ENCODE measurements at regions of chr5 and their contacts with region 1.

Region 1: GRCh38 chr5:143968011-143968878 is 156.3 kb downstream of the HMHB1 start:
- DNase-seq: no peak
- H3K4me3 ChIP-seq: no peak overlapping the region
- H3K27ac ChIP-seq: no peak overlapping the region
- H3K4me1 ChIP-seq: no peaks in the 10 kb centered on the region
- H3K27me3 ChIP-seq: peaks cover 0 to 7% of the 10 kb centered on the region in 2 donors
- CTCF ChIP-seq: no peak
- POLR2A ChIP-seq: no peak

Region 2: DNA sequence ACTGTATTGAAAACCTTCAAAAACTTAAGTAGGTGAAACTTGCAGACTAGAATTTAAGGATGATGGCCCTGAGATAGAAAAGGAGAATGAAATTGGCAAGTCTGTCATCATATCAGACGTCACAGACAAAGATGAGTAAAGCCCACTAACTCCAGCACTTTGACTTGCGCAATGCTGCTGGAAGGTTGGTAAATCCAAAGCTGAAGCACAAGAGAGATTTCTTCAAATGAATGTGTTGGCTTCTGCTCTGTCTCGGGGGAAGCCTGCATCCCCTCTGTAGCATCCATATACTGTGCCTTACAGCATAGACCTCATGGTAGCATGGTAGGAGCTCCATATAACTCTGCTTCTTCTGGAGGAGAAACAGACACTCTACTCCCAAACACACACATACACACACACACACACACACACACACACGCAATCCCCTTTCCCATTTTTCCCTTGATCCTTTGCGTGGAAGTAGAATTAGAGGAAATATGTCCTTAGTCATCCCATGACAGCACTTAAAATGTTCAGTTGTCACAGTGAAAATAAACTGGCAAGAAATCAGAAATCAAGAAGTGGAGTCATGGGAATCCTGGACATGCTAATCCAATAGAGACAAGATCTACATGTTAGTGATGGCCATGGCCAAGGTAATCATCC is 806.2 kb before region 1 on chr5:
- intact Hi-C with region 1: loop called (anchors 5 kb)
- DNase-seq: no peak
- H3K4me3 ChIP-seq: no peak overlapping the region
- H3K27ac ChIP-seq: no peak overlapping the region
- H3K4me1 ChIP-seq: no peaks in the 10 kb centered on the region
- H3K27me3 ChIP-seq: no peaks in the 10 kb centered on the region
- CTCF ChIP-seq: no peak
- POLR2A ChIP-seq: no peak

Region 3: DNA sequence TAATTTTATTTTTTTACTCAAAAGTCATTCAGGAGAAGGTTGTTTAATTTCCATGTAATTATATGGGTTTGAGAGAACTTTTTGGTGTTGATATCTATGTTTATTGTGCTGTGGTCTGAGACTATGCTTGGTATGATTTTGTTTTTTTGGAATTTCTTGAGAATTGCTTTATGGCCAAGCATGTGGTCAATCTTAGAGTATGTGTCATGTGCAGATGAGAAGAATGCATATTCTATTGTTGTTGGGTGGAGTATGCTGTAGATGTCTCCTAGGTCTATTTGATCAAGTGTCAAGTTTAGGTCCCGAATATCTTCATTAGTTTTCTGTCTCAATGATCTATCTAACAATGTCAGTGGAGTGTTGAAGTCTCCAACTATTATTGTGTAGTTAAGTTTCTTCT is 21.4 kb before region 1 on chr5:
- intact Hi-C with region 1: no loop called
- DNase-seq: no peak
- H3K4me3 ChIP-seq: no peak overlapping the region
- H3K27ac ChIP-seq: no peak overlapping the region
- H3K4me1 ChIP-seq: no peaks in the 10 kb centered on the region
- H3K27me3 ChIP-seq: no peaks in the 10 kb centered on the region
- CTCF ChIP-seq: no peak
- POLR2A ChIP-seq: no peak

Region 4: DNA sequence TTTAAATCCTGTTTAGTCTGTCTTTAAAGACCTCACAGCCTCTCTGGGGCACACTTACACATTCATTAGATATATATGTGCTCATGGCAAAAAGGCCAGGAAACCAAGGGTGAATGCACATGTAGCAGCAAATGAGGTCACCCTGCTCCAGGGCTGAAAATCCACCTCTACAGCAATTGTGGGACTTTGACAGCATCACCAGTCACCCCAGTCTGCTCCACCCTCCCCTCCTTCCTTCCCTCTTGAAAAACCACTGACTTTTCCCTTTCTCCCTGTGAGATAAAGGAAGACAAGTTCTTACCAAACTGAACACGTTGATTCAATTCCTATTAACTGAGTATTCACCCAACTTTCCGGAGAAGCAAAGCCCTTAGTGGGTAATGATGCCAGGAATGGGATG is 1953.0 kb after region 1 on chr5:
- intact Hi-C with region 1: no loop called
- DNase-seq: no peak
- H3K4me3 ChIP-seq: no peak overlapping the region
- H3K27ac ChIP-seq: no peak overlapping the region
- H3K4me1 ChIP-seq: peaks cover 0 to 8% of the 10 kb centered on the region in 2 donors
- H3K27me3 ChIP-seq: no peaks in the 10 kb centered on the region
- CTCF ChIP-seq: no peak
- POLR2A ChIP-seq: no peak